ENCODE measurements at regions of chr1 and their contacts with region 1.

Region 1: GRCh38 chr1:179706339-179706941 is 36.7 kb upstream of the FAM163A start:
- DNase-seq: peak; percentile 24 to 70
- ATAC-seq: no peak
- H3K4me3 ChIP-seq: no peak overlapping the region
- H3K27ac ChIP-seq: peak overlapping the region in 1 of 10 donors; percentile 30
- H3K4me1 ChIP-seq: peaks cover 3 to 40% (median 23%) of the 10 kb centered on the region in 9 donors
- H3K27me3 ChIP-seq: peaks cover 0 to 4% (median 0%) of the 10 kb centered on the region in 7 donors
- CTCF ChIP-seq: peak; percentile 58 to 89 (median 79)

Region 2: GRCh38 chr1:179478370-179478769 is 228.1 kb before region 1 on chr1:
- intact Hi-C with region 1: no loop called
- DNase-seq: no peak
- ATAC-seq: no peak
- H3K4me3 ChIP-seq: no peak overlapping the region
- H3K27ac ChIP-seq: no peak overlapping the region
- H3K4me1 ChIP-seq: no peaks in the 10 kb centered on the region
- H3K27me3 ChIP-seq: no peaks in the 10 kb centered on the region
- CTCF ChIP-seq: no peak

Region 3: DNA sequence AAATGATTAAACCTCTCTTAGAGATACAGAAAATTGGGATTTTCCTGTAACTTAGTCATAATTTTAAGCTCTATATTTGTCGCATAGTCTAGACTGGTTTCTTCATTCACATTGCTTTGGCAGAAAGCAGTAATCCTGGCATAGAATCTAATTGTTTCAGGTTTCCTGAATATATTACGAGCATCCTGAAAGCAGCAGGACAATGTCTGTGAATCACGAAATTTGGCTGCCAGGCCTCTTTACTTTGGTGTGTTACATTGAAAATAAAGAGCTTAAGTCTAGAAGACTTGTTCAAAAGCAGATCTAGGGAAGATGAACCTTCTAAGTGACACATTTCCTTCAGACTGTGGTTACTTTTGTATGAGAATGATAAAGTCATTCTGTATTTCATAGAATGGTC is 42.6 kb before region 1 on chr1:
- intact Hi-C with region 1: no loop called
- DNase-seq: no peak
- ATAC-seq: no peak
- H3K4me3 ChIP-seq: no peak overlapping the region
- H3K27ac ChIP-seq: no peak overlapping the region
- H3K4me1 ChIP-seq: peaks cover 0 to 4% (median 0%) of the 10 kb centered on the region in 9 donors
- H3K27me3 ChIP-seq: no peaks in the 10 kb centered on the region
- CTCF ChIP-seq: no peak

Region 4: GRCh38 chr1:179770884-179771502 is 64.6 kb after region 1 on chr1:
- intact Hi-C with region 1: no loop called
- DNase-seq: no peak
- ATAC-seq: no peak
- H3K4me3 ChIP-seq: no peak overlapping the region
- H3K27ac ChIP-seq: no peak overlapping the region
- H3K4me1 ChIP-seq: peaks cover 0 to 5% (median 0%) of the 10 kb centered on the region in 9 donors
- H3K27me3 ChIP-seq: no peaks in the 10 kb centered on the region
- CTCF ChIP-seq: peak in 5 of 9 donors; percentile 8 to 22 (median 15)

Region 5: GRCh38 chr1:179809506-179810366 is 103.3 kb after region 1 on chr1:
- intact Hi-C with region 1: loop called (anchors 1 to 2 kb)
- DNase-seq: peak; percentile 30 to 66
- ATAC-seq: peak; percentile 32 to 74 (median 63)
- H3K4me3 ChIP-seq: no peak overlapping the region
- H3K27ac ChIP-seq: no peak overlapping the region
- H3K4me1 ChIP-seq: peaks cover 0 to 18% (median 8%) of the 10 kb centered on the region in 9 donors
- H3K27me3 ChIP-seq: peaks cover 0 to 33% (median 5%) of the 10 kb centered on the region in 7 donors
- CTCF ChIP-seq: peak; percentile 75 to 94 (median 91)

Region 6: GRCh38 chr1:179816196-179816960 is 109.9 kb after region 1 on chr1:
- intact Hi-C with region 1: loop called in 9 of 10 experiments (anchors 1 to 2 kb)
- DNase-seq: peak; percentile 65 to 66
- ATAC-seq: peak; percentile 4 to 62 (median 32)
- H3K4me3 ChIP-seq: peak overlapping the region in 4 of 10 donors; percentile 2 to 51 (median 46)
- H3K27ac ChIP-seq: peak overlapping the region in 9 of 10 donors; percentile 8 to 75 (median 53)
- H3K4me1 ChIP-seq: peaks cover 5 to 50% (median 35%) of the 10 kb centered on the region in 9 donors
- H3K27me3 ChIP-seq: peaks cover 0 to 13% (median 4%) of the 10 kb centered on the region in 7 donors
- CTCF ChIP-seq: no peak